ENCODE measurements at regions of chr1 and their contacts with region 1.

Region 1: DNA sequence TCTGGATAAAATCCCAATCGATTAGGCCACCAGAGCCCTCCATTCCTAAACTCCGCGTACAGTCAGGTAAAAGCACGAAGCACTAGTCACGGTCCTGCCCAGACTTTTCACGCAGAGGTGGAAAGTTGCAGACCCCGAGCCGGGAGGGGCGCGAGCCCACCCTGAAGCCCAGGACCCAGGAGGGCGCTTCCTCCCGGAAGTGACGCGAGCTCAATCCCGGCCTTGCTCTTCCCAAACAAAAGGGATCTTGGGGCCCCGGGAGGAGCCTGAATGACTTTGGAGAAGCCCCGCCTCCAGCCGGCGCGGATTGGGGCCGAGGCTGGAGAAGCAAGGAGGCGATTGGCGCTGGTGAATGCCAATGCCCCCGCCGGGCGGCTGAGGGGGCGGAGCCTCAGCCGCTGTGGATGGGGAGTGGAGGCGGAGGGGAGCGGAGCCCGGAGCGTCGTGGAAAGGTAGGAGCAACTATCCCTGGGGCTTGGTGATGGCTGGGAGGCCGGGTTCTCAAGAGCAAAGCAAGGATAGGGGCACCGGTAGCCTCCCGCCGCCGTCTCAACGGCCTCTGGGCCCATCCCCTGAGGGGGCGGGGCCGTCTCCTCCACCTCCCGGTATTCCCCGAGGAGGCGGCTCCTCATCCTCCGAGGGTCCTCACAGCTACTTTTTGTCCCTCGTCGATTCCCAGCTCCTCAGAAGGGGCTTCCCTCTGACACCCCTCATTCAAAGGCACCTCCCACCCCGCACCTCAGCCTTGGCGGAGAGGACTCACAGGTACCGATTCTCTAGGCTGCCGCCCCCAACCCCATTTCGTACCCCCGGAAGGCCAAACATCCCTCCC is at the start of gene CTTNBP2NL:
- DNase-seq: peak; percentile 63
- H3K4me3 ChIP-seq: peak within 1 kb of the TSS; percentile 90
- H3K27me3 ChIP-seq: no peaks in the 10 kb centered on the region
- CTCF ChIP-seq: no peak
- polyA plus RNA-seq, gene CTTNBP2NL: 17.2 and 19.8 TPM in 2 replicates

Region 2: DNA sequence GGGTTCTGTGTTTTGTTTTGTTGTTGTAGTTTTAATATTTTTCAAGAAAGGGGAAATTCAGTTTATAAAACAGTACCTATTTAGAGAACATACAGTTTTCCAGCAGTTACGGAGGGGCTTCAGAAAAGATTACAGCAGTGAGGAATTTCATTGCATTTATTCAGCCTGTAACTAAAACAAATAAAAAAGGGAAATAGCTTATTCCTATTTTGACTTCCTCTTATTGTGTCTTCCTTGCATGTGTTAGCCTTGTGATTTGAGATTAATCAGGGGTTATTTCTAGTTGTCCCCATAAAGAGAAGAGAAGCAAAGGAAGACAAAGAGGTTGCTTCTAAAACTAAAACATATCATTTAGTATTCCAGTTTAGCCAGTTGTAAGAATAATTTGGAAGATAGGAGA is 35.0 kb after region 1 on chr1:
- CTCF ChIA-PET with region 1: interaction called, 3 read pairs
- POLR2A ChIA-PET with region 1: interaction called, 13 read pairs
- DNase-seq: no peak
- H3K4me3 ChIP-seq: no peak overlapping the region
- H3K27me3 ChIP-seq: no peaks in the 10 kb centered on the region
- CTCF ChIP-seq: no peak

Region 3: DNA sequence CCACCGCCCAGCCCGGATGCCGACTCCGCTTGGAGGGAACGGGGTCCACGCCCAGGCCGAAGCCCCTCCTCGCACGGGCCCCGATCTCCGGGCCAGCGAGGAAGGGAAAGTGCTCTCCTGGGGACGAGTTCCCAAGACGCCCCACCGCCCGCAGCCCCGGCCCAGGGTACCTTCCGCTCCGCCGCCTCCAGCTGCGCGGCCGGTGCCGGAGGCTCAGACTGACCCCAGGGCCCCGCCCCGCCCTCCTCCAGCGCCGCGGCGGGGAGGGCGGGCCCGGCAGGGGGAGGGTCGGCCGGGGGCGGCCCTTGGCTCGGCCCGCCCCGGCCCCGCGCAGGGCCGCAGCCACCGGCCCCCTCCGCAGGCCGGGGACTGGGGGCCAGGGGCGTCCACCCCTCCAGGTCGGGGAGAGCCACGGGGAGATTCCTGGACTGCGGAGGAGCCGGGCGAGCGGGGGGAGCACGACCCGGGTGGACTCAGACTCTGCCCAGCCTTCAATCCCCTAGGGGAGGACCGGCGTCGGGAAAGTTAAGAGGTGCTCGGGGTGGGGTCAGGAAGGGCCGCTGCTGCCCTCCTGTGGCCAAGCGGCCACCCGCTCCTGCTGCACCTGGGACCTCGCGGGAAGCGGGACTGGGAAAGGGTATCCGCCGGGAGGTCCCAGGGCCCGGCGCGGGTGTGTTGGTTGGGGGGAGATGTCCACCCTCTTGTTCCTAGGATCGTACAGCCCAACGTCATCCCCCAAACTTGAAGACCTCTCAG is 311.0 kb after region 1 on chr1 and contains the start of gene RHOC:
- CTCF ChIA-PET with region 1: interaction called, 28 read pairs
- POLR2A ChIA-PET with region 1: interaction called, 4 read pairs
- DNase-seq: no peak
- H3K4me3 ChIP-seq: peak within 1 kb of the TSS; percentile 70
- H3K27me3 ChIP-seq: no peaks in the 10 kb centered on the region
- CTCF ChIP-seq: peak; percentile 98
- polyA plus RNA-seq, gene RHOC: 1,093 and 1,537 TPM in 2 replicates